Heart right ventricle (tissue), 16 donors: ENCODE measurements at regions of chr18 and their contacts with region 1.

Region 1: DNA sequence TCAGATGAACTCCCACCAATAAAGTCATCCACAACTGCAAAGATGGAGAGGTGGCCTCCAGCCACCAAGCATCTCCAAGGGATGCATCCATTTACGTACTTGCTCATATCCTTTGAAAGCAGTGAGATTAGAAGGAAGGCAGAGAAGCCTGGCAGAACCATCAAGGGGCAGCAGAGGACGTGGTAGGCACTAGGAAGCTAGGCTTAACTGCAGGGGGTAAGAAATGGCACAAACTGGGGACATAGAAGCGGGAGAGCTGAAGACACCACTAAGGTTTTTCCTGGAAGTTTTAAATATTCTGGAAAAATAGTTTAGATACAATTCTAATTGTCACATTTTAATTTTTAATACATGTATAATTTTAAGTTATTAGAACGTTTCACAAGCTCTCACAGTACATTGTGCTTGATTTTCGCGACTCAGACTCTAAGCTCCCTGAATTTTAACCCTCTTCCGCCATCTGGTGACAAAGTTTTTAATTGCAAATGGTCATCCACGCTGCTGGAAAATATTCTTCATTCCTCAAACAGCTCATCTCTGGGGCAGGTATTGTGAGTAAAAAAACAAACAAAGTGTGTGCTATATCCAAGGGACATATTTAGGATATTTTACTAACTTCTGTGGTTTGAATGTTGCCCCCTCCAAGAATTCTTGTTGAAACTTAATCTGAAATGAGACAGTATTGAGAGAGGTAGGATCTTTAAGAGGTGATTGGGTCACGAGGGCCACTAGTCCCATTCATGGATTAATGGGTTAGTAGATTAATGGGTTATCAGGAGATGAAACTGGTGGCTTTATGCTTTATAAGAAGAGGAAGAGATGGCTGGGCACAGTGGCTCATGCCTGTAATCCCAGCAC is 1.6 kb upstream of the PSTPIP2 start:
- DNase-seq: peak in 1 of 2 donors; percentile 64
- ATAC-seq: peak in 6 of 8 donors; percentile 3 to 55 (median 42)
- H3K4me3 ChIP-seq: no peak overlapping the region
- H3K27ac ChIP-seq: no peak overlapping the region
- H3K4me1 ChIP-seq: peaks cover 3 to 45% (median 27%) of the 10 kb centered on the region in 9 donors
- H3K27me3 ChIP-seq: no peaks in the 10 kb centered on the region
- CTCF ChIP-seq: peak; percentile 32 to 76 (median 68)

Region 2: GRCh38 chr18:44246001-44246400 is 1827.7 kb before region 1 on chr18:
- intact Hi-C with region 1: no loop called
- DNase-seq: no peak
- ATAC-seq: no peak
- H3K4me3 ChIP-seq: no peak overlapping the region
- H3K27ac ChIP-seq: no peak overlapping the region
- H3K4me1 ChIP-seq: no peaks in the 10 kb centered on the region
- H3K27me3 ChIP-seq: no peaks in the 10 kb centered on the region
- CTCF ChIP-seq: no peak

Region 3: GRCh38 chr18:45690975-45691815 is 382.5 kb before region 1 on chr18:
- intact Hi-C with region 1: loop called in 4 of 10 experiments (anchors 5 to 10 kb)
- DNase-seq: peak; percentile 73 to 78
- ATAC-seq: peak; percentile 68 to 90 (median 86)
- H3K4me3 ChIP-seq: no peak overlapping the region
- H3K27ac ChIP-seq: no peak overlapping the region
- H3K4me1 ChIP-seq: peaks cover 0 to 22% (median 0%) of the 10 kb centered on the region in 9 donors
- H3K27me3 ChIP-seq: peaks cover 0 to 10% (median 3%) of the 10 kb centered on the region in 7 donors
- CTCF ChIP-seq: peak; percentile 67 to 92 (median 83)

Region 4: GRCh38 chr18:45910405-45911023 is 163.2 kb before region 1 on chr18:
- intact Hi-C with region 1: loop called in 1 of 10 experiments (anchors 10 kb)
- DNase-seq: peak; percentile 22 to 25
- ATAC-seq: peak in 5 of 8 donors; percentile 28 to 62 (median 53)
- H3K4me3 ChIP-seq: no peak overlapping the region
- H3K27ac ChIP-seq: no peak overlapping the region
- H3K4me1 ChIP-seq: no peaks in the 10 kb centered on the region
- H3K27me3 ChIP-seq: no peaks in the 10 kb centered on the region
- CTCF ChIP-seq: peak; percentile 33 to 79 (median 65)

Region 5: DNA sequence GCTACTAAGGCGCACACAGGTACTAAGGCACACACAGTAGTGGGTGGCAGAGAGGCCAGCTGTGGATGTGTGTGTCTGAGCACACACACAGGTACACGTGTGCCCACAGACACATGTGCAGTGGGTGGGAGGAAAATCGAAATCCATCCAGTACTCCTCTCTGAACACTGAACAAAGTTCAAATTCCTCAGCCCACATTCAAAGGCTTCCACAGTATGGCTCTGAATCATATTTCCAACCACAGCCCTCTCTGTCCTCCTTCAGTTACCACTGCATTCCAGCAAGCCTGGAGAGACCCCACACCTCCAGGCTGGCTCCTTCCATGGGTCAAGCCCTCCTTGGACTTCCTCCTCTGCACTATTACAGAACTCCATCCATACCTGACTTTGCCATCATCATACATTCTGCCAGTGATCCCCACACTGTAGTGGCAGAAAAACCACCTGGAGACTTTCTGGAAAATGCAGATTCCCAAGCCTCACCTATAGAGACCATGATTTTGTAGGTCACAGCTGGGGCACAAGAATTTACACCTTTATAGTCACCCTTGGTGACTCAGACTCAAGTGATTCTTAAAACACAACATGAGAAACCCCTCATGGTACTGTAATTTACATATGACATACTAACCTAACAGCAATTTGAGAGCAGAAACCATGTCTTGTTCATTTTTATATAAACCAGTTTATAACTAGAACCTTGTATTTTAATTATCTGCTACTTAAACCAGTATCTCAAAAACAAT is 137.9 kb before region 1 on chr18:
- intact Hi-C with region 1: loop called in 1 of 10 experiments (anchors 10 kb)
- DNase-seq: no peak
- ATAC-seq: no peak
- H3K4me3 ChIP-seq: no peak overlapping the region
- H3K27ac ChIP-seq: no peak overlapping the region
- H3K4me1 ChIP-seq: peaks cover 0 to 17% (median 0%) of the 10 kb centered on the region in 9 donors
- H3K27me3 ChIP-seq: no peaks in the 10 kb centered on the region
- CTCF ChIP-seq: no peak

Region 6: DNA sequence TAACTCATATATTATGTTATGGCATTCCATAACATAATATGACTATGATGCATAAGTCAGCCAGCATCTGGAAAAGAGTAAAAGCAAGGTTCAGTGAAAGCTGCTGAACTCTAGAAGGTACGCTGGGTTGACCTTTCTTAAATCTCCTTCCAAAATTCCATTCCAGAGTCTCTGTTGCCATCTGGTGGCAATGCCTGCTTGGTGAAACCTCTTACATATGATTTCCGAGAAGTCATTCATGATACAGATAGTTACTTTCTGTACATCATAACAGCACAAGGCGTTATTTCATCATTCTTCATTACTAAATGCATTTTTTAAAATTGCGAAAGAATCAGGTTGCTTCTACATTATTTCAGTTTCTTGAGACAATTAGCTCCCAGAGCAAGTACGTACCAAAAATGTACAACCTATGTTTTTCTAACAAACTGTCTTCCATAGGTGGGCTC is 99.6 kb before region 1 on chr18:
- intact Hi-C with region 1: loop called in 6 of 10 experiments (anchors 5 to 10 kb)
- DNase-seq: peak in 1 of 2 donors; percentile 66
- ATAC-seq: peak; percentile 58 to 81 (median 70)
- H3K4me3 ChIP-seq: no peak overlapping the region
- H3K27ac ChIP-seq: peak overlapping the region in 1 of 10 donors; percentile 54
- H3K4me1 ChIP-seq: peaks cover 0 to 12% (median 0%) of the 10 kb centered on the region in 9 donors
- H3K27me3 ChIP-seq: no peaks in the 10 kb centered on the region
- CTCF ChIP-seq: peak; percentile 20 to 79 (median 71)

Region 7: DNA sequence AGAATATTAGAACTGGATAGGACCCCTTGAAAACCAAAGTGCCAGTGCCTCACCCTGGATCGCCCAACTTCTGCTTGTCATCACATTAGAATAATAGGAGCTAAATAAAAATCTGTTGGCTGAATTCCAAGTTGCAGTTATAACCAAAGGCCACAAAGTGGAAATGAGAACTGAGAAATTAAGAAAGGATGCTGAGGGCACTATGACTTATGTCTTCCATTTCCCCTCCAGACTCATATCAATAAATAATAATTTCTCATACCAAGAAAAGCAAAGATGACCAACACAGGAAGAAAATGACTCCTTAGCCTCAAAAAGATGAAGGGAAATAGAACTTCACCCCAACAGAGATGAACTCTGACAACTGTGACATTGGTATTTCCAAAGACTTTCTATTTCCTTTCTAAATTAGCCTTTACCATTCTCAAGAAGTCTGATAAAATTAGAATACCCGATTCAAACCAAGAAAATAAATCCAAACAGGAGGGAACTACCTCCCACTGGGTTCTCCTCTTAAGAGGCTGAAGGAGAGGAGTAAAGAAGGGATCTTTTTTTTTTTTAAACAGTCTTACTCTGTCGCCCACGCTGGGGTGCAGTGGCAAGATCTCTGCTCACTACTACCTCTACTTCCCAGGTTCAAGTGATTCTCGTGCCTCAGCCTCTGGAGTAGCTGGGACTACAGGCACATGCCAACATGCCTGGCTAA is 60.1 kb before region 1 on chr18:
- intact Hi-C with region 1: loop called in 1 of 10 experiments (anchors 5 kb)
- DNase-seq: no peak
- ATAC-seq: no peak
- H3K4me3 ChIP-seq: no peak overlapping the region
- H3K27ac ChIP-seq: no peak overlapping the region
- H3K4me1 ChIP-seq: peaks cover 0 to 34% (median 0%) of the 10 kb centered on the region in 9 donors
- H3K27me3 ChIP-seq: no peaks in the 10 kb centered on the region
- CTCF ChIP-seq: no peak